ENCODE measurements at regions of chr2 and their contacts with region 1.

Region 1: DNA sequence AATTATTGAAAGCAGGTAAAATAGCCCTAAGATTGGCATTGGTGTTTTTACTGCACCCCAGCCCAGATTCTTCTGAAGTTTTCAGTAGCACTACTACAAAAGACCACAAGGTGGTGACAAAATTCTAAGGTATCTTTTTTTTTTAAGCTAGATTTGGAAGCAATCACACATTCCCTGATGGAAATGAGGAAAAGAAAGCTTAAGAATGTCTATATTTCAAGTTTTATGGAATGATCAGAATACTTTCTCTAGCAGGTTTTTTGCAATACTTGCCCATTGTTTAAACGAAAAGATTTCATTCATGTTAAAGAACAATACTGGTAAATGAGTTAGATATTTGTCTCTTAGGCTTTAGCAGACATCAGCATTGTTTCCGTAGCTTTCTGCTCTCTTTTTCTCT is 32.1 kb upstream of the ZNF638 start:
- DNase-seq: no peak
- ATAC-seq: no peak; the same call in 1 of the 2 replicates
- H3K4me3 ChIP-seq: no peak overlapping the region
- H3K27ac ChIP-seq: no peak overlapping the region
- H3K4me1 ChIP-seq: no peaks in the 10 kb centered on the region
- H3K27me3 ChIP-seq: no peaks in the 10 kb centered on the region
- CTCF ChIP-seq: peak; percentile 58 to 77 (median 64); a peak in 5 of 6 replicates
- POLR2A ChIP-seq: no peak
- RAD21 ChIP-seq: peak; percentile 75

Region 2: GRCh38 chr2:70580352-70580751 is 719.2 kb before region 1 on chr2:
- CTCF ChIA-PET with region 1: no interaction called
- POLR2A ChIA-PET with region 1: no interaction called
- RAD21 ChIA-PET with region 1: no interaction called
- intact Hi-C with region 1: no loop called
- DNase-seq: no peak
- ATAC-seq: no peak
- H3K4me3 ChIP-seq: no peak overlapping the region
- H3K27ac ChIP-seq: no peak overlapping the region
- H3K4me1 ChIP-seq: no peaks in the 10 kb centered on the region
- H3K27me3 ChIP-seq: no peaks in the 10 kb centered on the region
- CTCF ChIP-seq: no peak
- POLR2A ChIP-seq: no peak
- RAD21 ChIP-seq: no peak

Region 3: DNA sequence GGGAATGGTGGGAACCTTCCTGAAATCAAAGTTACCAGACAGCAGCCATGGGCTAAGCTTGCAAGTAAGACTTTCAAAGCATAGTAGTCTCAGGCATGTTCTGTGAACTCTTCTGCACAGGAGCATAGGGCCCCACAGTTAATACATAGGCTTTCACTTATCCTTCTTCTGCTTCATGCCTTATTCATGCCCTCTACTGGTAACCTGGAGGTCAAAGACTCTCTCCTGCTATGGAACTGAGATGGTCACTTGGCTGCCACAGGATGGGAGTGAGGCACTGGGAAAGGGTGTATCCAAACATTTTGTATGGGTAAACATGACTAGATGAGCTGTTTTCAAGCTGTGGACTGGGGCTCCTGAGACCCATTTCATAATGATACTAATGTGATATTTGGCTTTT is 17.0 kb before region 1 on chr2:
- CTCF ChIA-PET with region 1: interaction called, 12 read pairs
- POLR2A ChIA-PET with region 1: no interaction called
- RAD21 ChIA-PET with region 1: no interaction called
- intact Hi-C with region 1: no loop called
- DNase-seq: no peak
- ATAC-seq: peak; percentile 79
- H3K4me3 ChIP-seq: no peak overlapping the region
- H3K27ac ChIP-seq: no peak overlapping the region
- H3K4me1 ChIP-seq: peaks cover 6 to 12% of the 10 kb centered on the region in 2 experiments; a peak in 3 of 4 replicates
- H3K27me3 ChIP-seq: no peaks in the 10 kb centered on the region
- CTCF ChIP-seq: peak in 2 of 3 experiments; percentile 19 to 29; a peak in 2 of 6 replicates
- POLR2A ChIP-seq: no peak
- RAD21 ChIP-seq: peak; percentile 48

Measured in HCT116 (cell line).